OCI-LY7 (cell line): ENCODE measurements at regions of chr16 and their contacts with region 1.

Region 1: DNA sequence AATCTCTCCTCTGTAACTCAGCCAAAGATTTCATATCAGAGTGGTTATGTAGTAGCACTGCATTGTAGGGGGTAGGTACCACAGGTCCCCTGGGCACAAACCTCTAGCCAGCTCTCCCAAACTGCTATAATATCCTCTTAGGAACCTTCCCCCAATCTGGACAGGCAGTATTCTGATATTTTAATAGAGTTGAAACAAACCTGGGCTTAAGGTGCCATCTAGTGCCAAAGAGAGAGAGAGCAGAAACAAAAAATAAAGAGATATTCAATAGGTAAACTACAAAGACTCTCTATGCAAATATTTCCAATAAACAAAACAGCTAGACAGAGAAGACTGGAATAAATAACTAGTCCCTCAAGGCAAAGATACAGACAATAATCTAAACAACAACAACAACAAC is 1070.0 kb downstream of the CDH11 start:
- DNase-seq: peak; percentile 31
- H3K4me3 ChIP-seq: no peak overlapping the region
- H3K27ac ChIP-seq: no peak overlapping the region
- H3K4me1 ChIP-seq: no peaks in the 10 kb centered on the region
- CTCF ChIP-seq: peak; percentile 80

Region 2: DNA sequence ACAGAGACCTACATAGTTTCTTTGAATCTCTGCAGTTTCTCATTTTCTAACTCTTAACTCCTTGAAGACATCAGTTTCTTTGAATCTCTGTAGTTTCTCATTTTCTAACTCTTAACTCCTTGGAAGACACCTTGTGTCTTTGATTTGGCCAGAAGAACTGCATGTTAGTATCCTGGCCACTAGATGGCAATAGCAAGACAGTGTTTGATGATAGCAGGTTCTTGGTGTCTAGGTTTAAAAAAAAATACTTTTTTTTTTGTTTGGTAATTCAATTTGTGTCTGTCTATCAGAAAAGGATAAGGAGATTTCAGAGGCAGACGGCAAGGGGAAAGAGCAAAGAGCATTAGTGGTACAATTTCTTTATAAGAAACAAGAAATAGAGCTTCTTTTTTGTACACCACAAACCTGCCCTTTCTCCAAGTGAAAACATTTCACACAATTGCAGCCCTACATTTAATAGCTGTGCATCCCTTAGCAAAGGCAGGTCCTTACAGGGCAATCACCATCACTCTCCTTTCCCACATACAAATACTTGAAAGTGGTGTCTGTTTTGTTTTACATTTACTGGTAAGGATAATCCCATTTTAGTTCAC is 690.7 kb before region 1 on chr16:
- CTCF ChIA-PET with region 1: no interaction called
- POLR2A ChIA-PET with region 1: no interaction called
- intact Hi-C with region 1: loop called (anchors 5 kb)
- DNase-seq: peak; percentile 64
- H3K4me3 ChIP-seq: no peak overlapping the region
- H3K27ac ChIP-seq: no peak overlapping the region
- H3K4me1 ChIP-seq: no peaks in the 10 kb centered on the region
- CTCF ChIP-seq: peak; percentile 92